ENCODE measurements at regions of chr7 and their contacts with region 1.

Region 1: GRCh38 chr7:139118234-139118804 is 8.8 kb upstream of the ZC3HAV1 start:
- DNase-seq: no peak
- ATAC-seq: no peak
- H3K4me3 ChIP-seq: peak overlapping the region in 2 of 5 experiments; percentile 27 to 45
- H3K4me3 Mint-ChIP-seq: peak overlapping the region; percentile 85
- H3K27ac ChIP-seq: peak overlapping the region; percentile 91
- H3K27ac Mint-ChIP-seq: peak overlapping the region; percentile 97
- H3K4me1 ChIP-seq: peaks cover 20% of the 10 kb centered on the region in 2 donors
- H3K4me1 Mint-ChIP-seq: peaks cover 25% of the 10 kb centered on the region
- H3K27me3 ChIP-seq: no peaks in the 10 kb centered on the region
- H3K27me3 Mint-ChIP-seq: no peaks in the 10 kb centered on the region
- CTCF ChIP-seq: no peak

Region 2: GRCh38 chr7:139104091-139104450 is 14.2 kb before region 1 on chr7:
- CTCF ChIA-PET with region 1: interaction called, 8 read pairs
- POLR2A ChIA-PET with region 1: interaction called, 12 read pairs
- intact Hi-C with region 1: loop called (anchors 1 kb)
- DNase-seq: peak; percentile 49
- ATAC-seq: no peak
- H3K4me3 ChIP-seq: peak overlapping the region; percentile 45 to 95 (median 74)
- H3K4me3 Mint-ChIP-seq: peak overlapping the region; percentile 89
- H3K27ac ChIP-seq: peak overlapping the region; percentile 61 to 96
- H3K27ac Mint-ChIP-seq: peak overlapping the region; percentile 87
- H3K4me1 ChIP-seq: peaks cover 33 to 40% of the 10 kb centered on the region in 2 donors
- H3K4me1 Mint-ChIP-seq: peaks cover 49% of the 10 kb centered on the region
- H3K27me3 ChIP-seq: no peaks in the 10 kb centered on the region
- H3K27me3 Mint-ChIP-seq: no peaks in the 10 kb centered on the region
- CTCF ChIP-seq: no peak

Region 3: GRCh38 chr7:139133335-139134139 is 15.2 kb after region 1 on chr7:
- CTCF ChIA-PET with region 1: interaction called, 8 read pairs
- POLR2A ChIA-PET with region 1: interaction called, 12 read pairs
- intact Hi-C with region 1: loop called (anchors 1 kb)
- DNase-seq: peak; percentile 90
- ATAC-seq: peak; percentile 96
- H3K4me3 ChIP-seq: peak overlapping the region; percentile 46 to 63 (median 58)
- H3K4me3 Mint-ChIP-seq: peak overlapping the region; percentile 93
- H3K27ac ChIP-seq: peak overlapping the region; percentile 18 to 69
- H3K27ac Mint-ChIP-seq: peak overlapping the region; percentile 88
- H3K4me1 ChIP-seq: peaks cover 9 to 13% of the 10 kb centered on the region in 2 donors
- H3K4me1 Mint-ChIP-seq: peaks cover 18% of the 10 kb centered on the region
- H3K27me3 ChIP-seq: no peaks in the 10 kb centered on the region
- H3K27me3 Mint-ChIP-seq: no peaks in the 10 kb centered on the region
- CTCF ChIP-seq: no peak

Measured in B cell (primary cell).